Activated B cell treated with CpG ODN at 0.5 μM for 24 hours (primary cell): ENCODE measurements at regions of chr11 and their contacts with region 1.

Region 1: DNA sequence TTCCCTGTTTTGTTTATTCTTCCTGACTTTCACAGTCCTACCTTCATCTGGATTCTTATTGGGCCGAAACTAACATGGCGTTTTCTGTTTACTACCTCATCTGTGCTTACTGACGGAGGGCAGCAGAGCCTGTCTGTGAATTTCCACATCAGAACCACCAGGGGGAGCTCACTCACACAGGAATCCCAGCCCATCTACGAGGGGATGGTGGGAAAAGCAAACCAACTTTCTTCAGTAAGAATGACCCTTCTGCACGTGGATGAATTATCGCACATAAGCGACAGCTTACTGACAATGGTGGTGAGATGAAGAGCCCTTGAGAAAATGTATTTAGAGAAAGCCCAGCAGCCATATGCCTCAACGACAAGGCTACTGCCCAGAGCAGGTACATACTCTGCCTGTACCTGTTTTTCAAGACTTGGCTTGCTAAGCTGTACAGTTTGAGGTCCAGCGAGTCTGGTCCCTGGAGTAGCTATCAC is 42.5 kb downstream of the LARGE2 start:
- DNase-seq: peak; percentile 24
- ATAC-seq: peak; percentile 99
- H3K4me3 Mint-ChIP-seq: no peak overlapping the region
- H3K27ac Mint-ChIP-seq: no peak overlapping the region
- H3K4me1 Mint-ChIP-seq: no peaks in the 10 kb centered on the region
- H3K27me3 Mint-ChIP-seq: no peaks in the 10 kb centered on the region
- CTCF ChIP-seq: peak; percentile 23

Region 2: GRCh38 chr11:45872513-45873356 is 92.2 kb before region 1 on chr11:
- CTCF ChIA-PET with region 1: interaction called, 19 read pairs
- POLR2A ChIA-PET with region 1: no interaction called
- intact Hi-C with region 1: no loop called
- DNase-seq: peak; percentile 31
- ATAC-seq: peak; percentile 81
- H3K4me3 Mint-ChIP-seq: no peak overlapping the region
- H3K27ac Mint-ChIP-seq: no peak overlapping the region
- H3K4me1 Mint-ChIP-seq: no peaks in the 10 kb centered on the region
- H3K27me3 Mint-ChIP-seq: no peaks in the 10 kb centered on the region
- CTCF ChIP-seq: no peak

Region 3: GRCh38 chr11:45917623-45918330 is 47.2 kb before region 1 on chr11 and contains the start of gene PEX16:
- CTCF ChIA-PET with region 1: interaction called, 17 read pairs
- POLR2A ChIA-PET with region 1: interaction called, 16 read pairs
- intact Hi-C with region 1: loop called (anchors 2 kb)
- DNase-seq: peak; percentile 87
- ATAC-seq: peak; percentile 85
- H3K4me3 Mint-ChIP-seq: peak within 1 kb of the TSS; percentile 94
- H3K27ac Mint-ChIP-seq: peak within 1 kb of the TSS; percentile 97
- H3K4me1 Mint-ChIP-seq: peaks cover 61% of the 10 kb centered on the region
- H3K27me3 Mint-ChIP-seq: no peaks in the 10 kb centered on the region
- CTCF ChIP-seq: no peak
- total RNA-seq, gene PEX16: 72.0 and 77.7 TPM in 2 replicates

Region 4: DNA sequence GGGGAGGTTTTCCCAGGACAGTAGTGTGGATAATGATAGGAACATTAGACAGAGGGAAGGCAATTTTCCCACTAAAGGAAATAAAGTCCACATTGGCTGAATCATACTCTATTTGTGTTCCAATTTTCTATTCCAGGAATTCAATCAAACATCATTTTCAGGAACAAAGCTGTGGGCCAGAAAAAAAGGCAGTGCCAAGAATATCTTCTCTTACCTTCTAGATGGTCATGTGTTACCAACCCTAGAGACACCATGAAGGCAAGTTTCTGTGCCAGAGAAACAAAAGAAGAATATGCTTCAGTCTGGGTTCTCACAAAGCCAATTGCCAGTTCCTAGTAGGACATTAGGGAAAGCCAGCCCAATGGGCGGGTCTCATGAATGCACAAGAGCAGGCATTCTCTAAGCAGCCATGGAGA is 14.9 kb before region 1 on chr11:
- CTCF ChIA-PET with region 1: interaction called, 13 read pairs
- POLR2A ChIA-PET with region 1: interaction called, 3 read pairs
- intact Hi-C with region 1: no loop called
- DNase-seq: no peak
- ATAC-seq: no peak
- H3K4me3 Mint-ChIP-seq: no peak overlapping the region
- H3K27ac Mint-ChIP-seq: no peak overlapping the region
- H3K4me1 Mint-ChIP-seq: no peaks in the 10 kb centered on the region
- H3K27me3 Mint-ChIP-seq: no peaks in the 10 kb centered on the region
- CTCF ChIP-seq: no peak

Region 5: DNA sequence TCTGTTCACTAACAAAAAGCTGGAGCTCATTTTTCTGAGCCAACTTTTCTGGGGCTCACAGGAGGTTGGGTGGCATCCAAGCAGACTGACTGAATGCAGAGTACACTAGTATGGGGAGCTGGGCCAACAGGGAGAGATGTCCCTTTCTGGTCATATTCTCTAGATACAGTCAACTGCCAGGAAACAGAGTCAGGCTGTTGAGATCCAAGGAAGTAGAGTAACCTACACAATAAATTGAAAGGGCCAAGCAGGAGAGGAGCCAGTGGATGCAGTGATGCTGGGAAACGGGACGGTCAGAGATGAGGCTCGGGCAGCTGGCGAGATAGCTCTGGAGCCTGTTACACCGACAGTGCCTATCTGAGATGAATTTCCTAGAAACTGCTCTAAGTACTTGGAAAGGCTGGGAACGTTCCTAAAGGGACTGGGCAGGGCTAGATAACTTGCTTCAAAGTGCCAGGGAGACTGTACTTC is 28.6 kb after region 1 on chr11:
- CTCF ChIA-PET with region 1: no interaction called
- POLR2A ChIA-PET with region 1: no interaction called
- intact Hi-C with region 1: no loop called
- DNase-seq: no peak
- ATAC-seq: no peak
- H3K4me3 Mint-ChIP-seq: no peak overlapping the region
- H3K27ac Mint-ChIP-seq: no peak overlapping the region
- H3K4me1 Mint-ChIP-seq: peaks cover 22% of the 10 kb centered on the region
- H3K27me3 Mint-ChIP-seq: no peaks in the 10 kb centered on the region
- CTCF ChIP-seq: no peak

Region 6: DNA sequence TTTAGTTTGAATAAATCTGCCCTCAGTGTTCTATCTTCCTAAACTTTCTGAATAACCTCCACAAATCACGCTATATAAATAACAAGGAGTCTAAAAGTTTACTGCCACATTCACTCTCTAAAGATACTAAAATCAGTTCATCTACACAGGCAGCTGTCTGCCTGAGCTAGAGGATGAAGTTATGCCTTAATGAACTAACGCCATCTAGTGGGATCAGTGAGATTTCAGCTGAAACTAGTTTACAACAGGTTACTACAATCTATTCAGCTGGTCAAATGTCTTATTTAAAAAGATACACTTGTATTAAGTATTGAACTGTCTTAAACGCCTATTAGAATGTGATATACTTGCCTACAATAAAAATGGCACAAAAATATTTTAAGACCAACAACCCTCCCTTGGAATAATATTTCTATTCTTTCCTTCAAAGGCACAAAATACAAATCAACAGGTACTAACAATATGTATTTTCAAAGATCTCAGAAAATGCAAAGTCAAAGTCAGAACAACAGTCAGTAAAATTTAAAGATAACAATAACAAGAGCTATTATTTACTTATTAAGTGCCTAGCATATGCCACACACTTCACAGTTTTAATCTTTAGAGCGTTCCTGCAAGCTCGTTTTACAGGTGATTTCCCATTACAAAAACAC is 41.6 kb after region 1 on chr11:
- CTCF ChIA-PET with region 1: interaction called, 23 read pairs
- POLR2A ChIA-PET with region 1: no interaction called
- intact Hi-C with region 1: loop called (anchors 1 kb)
- DNase-seq: no peak
- ATAC-seq: peak; percentile 76
- H3K4me3 Mint-ChIP-seq: no peak overlapping the region
- H3K27ac Mint-ChIP-seq: no peak overlapping the region
- H3K4me1 Mint-ChIP-seq: peaks cover 3% of the 10 kb centered on the region
- H3K27me3 Mint-ChIP-seq: no peaks in the 10 kb centered on the region
- CTCF ChIP-seq: peak; percentile 20

Region 7: DNA sequence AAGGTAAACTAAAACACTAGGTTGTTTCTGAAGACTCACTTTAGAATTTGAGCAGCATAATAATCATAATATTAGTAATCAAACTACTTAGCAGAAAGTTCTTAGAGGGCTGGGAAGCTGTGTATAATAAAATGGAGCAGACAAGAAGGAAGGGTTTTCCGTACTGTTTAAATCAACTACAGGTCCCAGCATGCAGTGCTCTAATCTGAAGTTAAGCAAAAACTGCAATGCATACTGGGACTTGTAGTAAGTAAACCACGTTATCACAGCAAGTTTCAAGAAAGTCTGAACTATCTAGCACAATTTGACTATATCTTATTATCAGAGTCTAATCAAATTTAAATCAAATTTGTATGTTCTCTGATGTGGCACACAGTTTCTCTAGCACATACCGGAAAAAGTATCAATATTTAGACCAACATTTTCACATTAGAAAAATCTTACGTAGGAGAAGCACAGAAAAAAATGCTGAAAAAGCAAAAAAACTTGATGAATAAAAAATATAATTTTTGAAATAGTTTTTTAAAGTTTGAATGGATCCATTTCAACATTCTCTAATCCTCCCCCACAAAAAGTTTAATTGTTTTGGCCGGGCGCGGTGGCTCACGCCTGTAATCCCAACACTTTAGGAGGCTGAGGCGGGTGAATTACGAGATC is 148.1 kb after region 1 on chr11:
- CTCF ChIA-PET with region 1: no interaction called
- POLR2A ChIA-PET with region 1: no interaction called
- intact Hi-C with region 1: no loop called
- DNase-seq: no peak
- ATAC-seq: peak; percentile 99
- H3K4me3 Mint-ChIP-seq: no peak overlapping the region
- H3K27ac Mint-ChIP-seq: no peak overlapping the region
- H3K4me1 Mint-ChIP-seq: peaks cover 46% of the 10 kb centered on the region
- H3K27me3 Mint-ChIP-seq: no peaks in the 10 kb centered on the region
- CTCF ChIP-seq: no peak